PC-3 (cell line): ENCODE measurements at regions of chr14 and their contacts with region 1.

Region 1: DNA sequence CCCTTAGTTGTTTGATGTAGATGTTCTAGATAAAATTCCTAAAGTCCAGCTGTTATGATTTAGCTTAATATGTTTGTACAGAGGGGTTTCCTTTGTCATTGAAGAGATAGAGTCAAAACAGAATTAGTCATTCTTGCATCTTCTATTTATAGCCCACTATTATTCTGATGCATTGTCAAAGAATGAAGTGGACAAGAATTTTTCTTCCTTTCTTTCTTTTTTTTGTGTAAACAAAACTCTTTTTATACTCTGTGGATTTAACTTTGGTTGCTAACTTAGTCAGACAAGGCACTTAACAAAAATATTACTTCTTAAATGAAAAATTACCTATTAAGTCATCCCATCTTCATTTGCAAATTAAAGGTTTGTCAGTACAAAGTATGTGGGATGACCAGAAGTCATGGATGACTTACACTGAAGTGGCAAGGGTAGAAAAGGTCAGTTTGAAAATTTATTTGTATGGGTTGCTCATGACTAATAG is 215.6 kb upstream of the DDHD1 start:
- DNase-seq: peak; percentile 70
- ATAC-seq: peak; percentile 81
- H3K4me3 ChIP-seq: no peak overlapping the region
- H3K27ac ChIP-seq: peak overlapping the region; percentile 14; the same call in 1 of the 2 replicates
- H3K4me1 ChIP-seq: peaks cover 35% of the 10 kb centered on the region
- H3K27me3 ChIP-seq: no peaks in the 10 kb centered on the region
- CTCF ChIP-seq: no peak

Region 2: DNA sequence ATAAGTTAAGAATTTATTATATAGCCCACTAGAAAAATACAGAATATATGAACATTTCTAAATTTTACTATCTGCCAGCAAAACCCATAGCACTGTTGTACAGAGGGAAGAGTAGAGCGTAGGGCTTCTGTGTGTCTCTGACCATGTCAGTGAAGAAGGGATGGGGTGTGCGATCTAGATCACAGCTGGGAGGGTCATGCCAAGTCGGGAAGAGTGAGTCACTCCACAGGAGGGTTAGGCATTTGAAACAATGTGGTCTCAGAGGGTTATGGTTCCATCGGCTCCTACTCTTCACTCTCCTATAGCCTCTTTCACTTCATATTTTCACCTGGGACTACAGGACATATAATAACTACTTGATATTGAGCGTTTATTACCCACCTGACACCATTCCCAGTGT is 30.6 kb before region 1 on chr14:
- CTCF ChIA-PET with region 1: no interaction called
- POLR2A ChIA-PET with region 1: no interaction called
- intact Hi-C with region 1: no loop called
- DNase-seq: peak; percentile 37
- ATAC-seq: peak; percentile 74
- H3K4me3 ChIP-seq: no peak overlapping the region
- H3K27ac ChIP-seq: no peak overlapping the region
- H3K4me1 ChIP-seq: no peaks in the 10 kb centered on the region
- H3K27me3 ChIP-seq: no peaks in the 10 kb centered on the region
- CTCF ChIP-seq: no peak

Region 3: GRCh38 chr14:53380052-53380866 is 11.5 kb after region 1 on chr14:
- CTCF ChIA-PET with region 1: no interaction called
- POLR2A ChIA-PET with region 1: no interaction called
- intact Hi-C with region 1: loop called (anchors 1 kb)
- DNase-seq: no peak
- ATAC-seq: 0 out of 2 replicates have a peak, but pooled peaks have one; percentile 13
- H3K4me3 ChIP-seq: no peak overlapping the region
- H3K27ac ChIP-seq: no peak overlapping the region
- H3K4me1 ChIP-seq: peaks cover 5% of the 10 kb centered on the region; the same call in 1 of the 2 replicates
- H3K27me3 ChIP-seq: no peaks in the 10 kb centered on the region
- CTCF ChIP-seq: no peak